ENCODE measurements at regions of chr6 and their contacts with region 1.

Region 1: DNA sequence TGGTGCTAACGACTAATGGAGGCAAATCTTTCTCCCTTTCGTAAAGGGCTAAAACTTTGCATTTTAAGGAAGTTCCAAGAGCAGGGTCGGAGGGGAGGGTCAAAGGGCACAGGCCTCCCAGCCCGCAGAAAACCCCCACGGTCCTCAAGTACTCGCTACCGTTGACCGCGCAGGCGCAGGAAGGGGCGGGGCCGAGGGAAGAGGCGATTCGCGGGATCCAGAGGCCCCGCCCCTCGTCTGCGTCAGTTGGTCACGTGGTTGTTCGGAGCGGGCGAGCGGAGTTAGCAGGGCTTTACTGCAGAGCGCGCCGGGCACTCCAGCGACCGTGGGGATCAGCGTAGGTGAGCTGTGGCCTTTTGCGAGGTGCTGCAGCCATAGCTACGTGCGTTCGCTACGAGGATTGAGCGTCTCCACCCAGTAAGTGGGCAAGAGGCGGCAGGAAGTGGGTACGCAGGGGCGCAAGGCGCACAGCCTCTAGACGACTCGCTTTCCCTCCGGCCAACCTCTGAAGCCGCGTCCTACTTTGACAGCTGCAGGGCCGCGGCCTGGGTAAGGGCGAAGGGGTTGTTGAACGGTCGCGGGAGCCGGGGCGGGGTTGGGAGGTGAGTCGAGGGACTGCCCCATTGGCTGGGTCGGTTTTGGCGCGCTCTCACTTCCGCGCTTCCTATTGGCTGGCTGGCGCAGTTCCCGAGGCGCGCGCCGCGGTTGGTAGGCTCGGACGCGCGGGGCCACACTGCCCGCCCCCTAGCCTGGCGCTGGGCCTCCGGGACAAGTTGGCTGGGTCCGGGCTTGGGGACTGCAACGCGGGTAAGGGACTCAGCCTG is at the start of gene GMNN:
- DNase-seq: peak; percentile 81
- ATAC-seq: peak; percentile 94
- H3K4me3 ChIP-seq: peak within 1 kb of the TSS; percentile 80 to 98
- H3K27ac ChIP-seq: peak within 1 kb of the TSS; percentile 93
- H3K4me1 ChIP-seq: peaks cover 6 to 19% of the 10 kb centered on the region in 2 experiments; a peak in 3 of 4 replicates
- H3K27me3 ChIP-seq: no peaks in the 10 kb centered on the region
- CTCF ChIP-seq: no peak
- POLR2A ChIP-seq: peak; percentile 91
- RAD21 ChIP-seq: no peak
- total RNA-seq, gene GMNN: 54.9 TPM

Region 2: DNA sequence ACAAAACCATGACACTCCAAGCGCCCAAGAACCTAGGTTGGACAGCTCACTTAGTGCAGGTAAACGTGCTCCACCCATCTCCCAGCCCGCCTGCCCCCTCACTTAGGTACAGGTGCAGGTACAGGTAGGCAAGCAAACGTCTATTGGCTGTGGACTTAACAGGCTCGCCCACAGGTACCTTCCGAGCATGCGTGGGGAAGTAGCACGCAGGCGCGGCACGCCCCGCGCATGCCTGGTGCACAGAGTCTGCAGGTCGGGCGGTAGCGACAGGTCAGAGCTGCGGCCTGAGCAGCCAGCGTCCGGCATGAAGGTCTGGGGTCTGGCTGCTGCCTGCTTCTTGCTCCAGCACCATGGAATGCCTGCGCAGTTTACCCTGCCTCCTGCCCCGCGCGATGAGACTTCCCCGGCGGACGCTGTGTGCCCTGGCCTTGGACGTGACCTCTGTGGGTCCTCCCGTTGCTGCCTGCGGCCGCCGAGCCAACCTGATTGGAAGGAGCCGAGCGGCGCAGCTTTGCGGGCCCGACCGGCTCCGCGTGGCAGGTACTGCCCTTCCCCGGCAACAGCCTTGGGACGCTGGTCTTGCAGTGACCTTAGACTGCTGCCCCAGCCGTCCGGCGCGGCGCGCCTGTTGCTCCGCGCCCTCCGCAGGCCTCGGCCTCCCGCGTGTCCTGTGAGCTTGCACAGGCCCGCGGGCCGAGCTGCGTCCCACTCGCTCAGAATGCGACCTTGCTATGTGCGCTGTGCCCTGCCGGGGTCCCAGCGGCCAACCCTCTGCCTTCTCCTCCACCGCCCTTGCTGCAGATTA is 372.0 kb before region 1 on chr6 and contains the start of gene MRS2:
- CTCF ChIA-PET with region 1: no interaction called
- POLR2A ChIA-PET with region 1: no interaction called
- RAD21 ChIA-PET with region 1: no interaction called
- intact Hi-C with region 1: loop called (anchors 10 kb)
- DNase-seq: peak; percentile 92
- ATAC-seq: peak; percentile 98
- H3K4me3 ChIP-seq: peak within 1 kb of the TSS; percentile 75 to 90
- H3K27ac ChIP-seq: peak within 1 kb of the TSS; percentile 67
- H3K4me1 ChIP-seq: peaks cover 2 to 20% of the 10 kb centered on the region in 2 experiments; a peak in 3 of 4 replicates
- H3K27me3 ChIP-seq: no peaks in the 10 kb centered on the region
- CTCF ChIP-seq: no peak
- POLR2A ChIP-seq: peak; percentile 89
- RAD21 ChIP-seq: no peak
- total RNA-seq, gene MRS2: 39.9 TPM

Region 3: DNA sequence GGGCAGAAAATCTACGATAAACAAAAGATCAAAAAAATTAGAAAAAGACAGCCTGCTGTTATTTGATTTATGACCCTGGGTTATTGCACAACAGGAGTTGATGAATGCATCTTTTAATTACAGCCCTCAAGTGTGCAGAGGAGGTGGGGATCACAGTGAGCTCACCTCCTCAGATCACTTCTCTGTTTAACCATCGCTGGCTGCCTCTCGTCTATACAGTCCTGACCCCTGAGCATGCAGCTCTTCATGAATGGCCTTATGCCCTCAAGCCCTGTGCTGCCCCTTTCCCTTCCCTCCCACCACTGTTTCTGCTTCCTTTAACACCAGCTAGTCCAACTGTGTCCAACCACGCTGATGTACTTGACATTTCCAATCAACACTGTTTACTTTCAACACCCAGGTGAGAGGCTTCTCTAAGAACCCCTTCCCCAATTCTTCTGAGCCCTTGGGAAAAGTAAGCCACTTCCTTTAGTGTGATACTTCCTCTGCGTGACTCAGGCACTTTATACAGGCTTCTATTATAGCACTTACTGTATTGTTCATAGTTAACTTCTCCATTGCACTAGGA is 221.4 kb after region 1 on chr6:
- CTCF ChIA-PET with region 1: no interaction called
- POLR2A ChIA-PET with region 1: no interaction called
- RAD21 ChIA-PET with region 1: no interaction called
- intact Hi-C with region 1: no loop called
- DNase-seq: no peak
- ATAC-seq: no peak
- H3K4me3 ChIP-seq: no peak overlapping the region
- H3K27ac ChIP-seq: no peak overlapping the region
- H3K4me1 ChIP-seq: no peaks in the 10 kb centered on the region
- H3K27me3 ChIP-seq: no peaks in the 10 kb centered on the region
- CTCF ChIP-seq: no peak
- POLR2A ChIP-seq: no peak
- RAD21 ChIP-seq: no peak

Region 4: GRCh38 chr6:25670793-25671513 is 896.0 kb after region 1 on chr6:
- CTCF ChIA-PET with region 1: no interaction called
- POLR2A ChIA-PET with region 1: no interaction called
- RAD21 ChIA-PET with region 1: no interaction called
- intact Hi-C with region 1: no loop called
- DNase-seq: peak; percentile 34
- ATAC-seq: peak; percentile 63; the same call in 1 of the 2 replicates
- H3K4me3 ChIP-seq: no peak overlapping the region
- H3K27ac ChIP-seq: no peak overlapping the region
- H3K4me1 ChIP-seq: peaks cover 0 to 13% of the 10 kb centered on the region in 2 experiments; a peak in 2 of 4 replicates
- H3K27me3 ChIP-seq: no peaks in the 10 kb centered on the region
- CTCF ChIP-seq: peak in 1 of 3 experiments; percentile 21; a peak in 1 of 6 replicates
- POLR2A ChIP-seq: no peak
- RAD21 ChIP-seq: peak; percentile 18; the same call in 1 of the 2 replicates